ENCODE measurements at regions of chr14 and their contacts with region 1.

Region 1: GRCh38 chr14:74608959-74609611 is 3.0 kb downstream of the LTBP2 start:
- DNase-seq: peak; percentile 90 to 98
- H3K4me3 ChIP-seq: no peak overlapping the region
- CTCF ChIP-seq: peak in 1 of 3 donors; percentile 81
- POLR2A ChIP-seq: no peak

Region 2: GRCh38 chr14:73027546-73027945 is 1581.5 kb before region 1 on chr14:
- intact Hi-C with region 1: no loop called
- DNase-seq: no peak
- H3K4me3 ChIP-seq: no peak overlapping the region
- CTCF ChIP-seq: no peak
- POLR2A ChIP-seq: no peak

Region 3: GRCh38 chr14:74501135-74501614 is 107.9 kb before region 1 on chr14:
- intact Hi-C with region 1: loop called (anchors 10 kb)
- DNase-seq: peak; percentile 57 to 92
- H3K4me3 ChIP-seq: no peak overlapping the region
- CTCF ChIP-seq: no peak
- POLR2A ChIP-seq: no peak

Region 4: DNA sequence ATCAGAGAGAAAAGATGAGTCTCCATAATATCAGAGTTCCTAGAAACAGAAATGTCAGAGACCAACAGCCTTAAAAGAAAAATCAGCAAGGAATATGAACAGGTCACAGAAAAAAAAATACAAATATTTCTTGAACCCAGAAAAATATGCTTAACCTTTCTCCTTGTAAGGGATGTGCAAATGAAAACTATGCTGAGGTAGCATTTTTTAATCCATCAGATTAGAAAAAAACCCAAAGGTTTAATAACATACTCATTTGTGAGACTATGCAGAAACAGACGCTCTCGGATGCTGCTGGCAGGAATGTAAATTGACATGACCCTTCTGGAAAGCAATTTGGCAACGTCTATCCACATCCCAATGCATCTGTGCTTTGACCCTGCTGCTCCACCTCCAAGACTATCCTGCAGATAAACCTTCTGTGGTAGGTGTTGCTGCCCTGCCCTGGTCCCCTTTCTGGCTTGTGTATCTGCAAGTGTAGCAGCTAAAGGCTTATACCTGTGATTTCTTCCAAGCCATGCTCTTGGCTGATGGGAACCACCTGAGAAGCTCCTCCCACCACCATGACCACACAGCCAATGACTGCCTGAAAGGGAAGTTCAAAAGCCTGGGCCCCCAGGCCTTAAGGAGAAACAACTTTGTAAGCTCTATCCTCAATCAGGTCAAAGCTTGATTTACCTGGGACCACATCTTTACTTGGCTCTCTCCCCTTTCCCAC is 46.4 kb before region 1 on chr14:
- intact Hi-C with region 1: no loop called
- DNase-seq: no peak
- H3K4me3 ChIP-seq: no peak overlapping the region
- CTCF ChIP-seq: no peak
- POLR2A ChIP-seq: no peak

Measured in lower leg skin (tissue), 4 donors.